H1 (cell line): ENCODE measurements at regions of chr14 and their contacts with region 1.

Region 1: GRCh38 chr14:60331201-60332045 is 82.4 kb downstream of the PPM1A start:
- DNase-seq: peak; percentile 68 to 92
- H3K4me3 ChIP-seq: peak overlapping the region; percentile 32 to 55 (median 44); a peak in 7 of 8 replicates
- H3K27ac ChIP-seq: no peak overlapping the region
- H3K4me1 ChIP-seq: peaks cover 2 to 12% (median 8%) of the 10 kb centered on the region in 4 experiments; a peak in 6 of 7 replicates
- H3K27me3 ChIP-seq: peaks cover 0 to 5% (median 1%) of the 10 kb centered on the region in 4 experiments; a peak in 3 of 7 replicates
- CTCF ChIP-seq: peak; percentile 82 to 87 (median 86)
- EP300 ChIP-seq: no peak
- POLR2A ChIP-seq: no peak
- RAD21 ChIP-seq: peak; percentile 82 to 88

Region 2: DNA sequence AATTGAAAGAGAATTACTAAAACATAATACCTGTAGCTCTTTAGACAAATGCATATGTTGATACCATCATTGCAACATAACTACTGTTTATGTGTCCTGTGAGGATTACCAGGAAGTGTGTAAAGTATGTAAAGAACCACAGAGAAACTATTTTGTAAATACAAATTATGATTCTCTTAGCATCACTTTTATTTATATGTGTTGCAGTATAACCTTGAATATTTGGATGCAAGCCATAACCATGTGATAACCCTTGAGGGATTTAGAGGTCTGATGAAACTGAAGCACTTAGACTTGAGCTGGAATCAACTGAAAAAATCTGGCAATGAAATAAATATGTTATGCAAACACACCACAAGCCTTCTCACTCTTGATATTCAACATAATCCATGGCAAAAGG is 334.0 kb before region 1 on chr14:
- CTCF ChIA-PET with region 1: no interaction called
- POLR2A ChIA-PET with region 1: no interaction called
- DNase-seq: no peak
- H3K4me3 ChIP-seq: no peak overlapping the region
- H3K27ac ChIP-seq: no peak overlapping the region
- H3K4me1 ChIP-seq: no peaks in the 10 kb centered on the region
- H3K27me3 ChIP-seq: no peaks in the 10 kb centered on the region
- CTCF ChIP-seq: no peak
- EP300 ChIP-seq: no peak
- POLR2A ChIP-seq: no peak
- RAD21 ChIP-seq: no peak

Region 3: DNA sequence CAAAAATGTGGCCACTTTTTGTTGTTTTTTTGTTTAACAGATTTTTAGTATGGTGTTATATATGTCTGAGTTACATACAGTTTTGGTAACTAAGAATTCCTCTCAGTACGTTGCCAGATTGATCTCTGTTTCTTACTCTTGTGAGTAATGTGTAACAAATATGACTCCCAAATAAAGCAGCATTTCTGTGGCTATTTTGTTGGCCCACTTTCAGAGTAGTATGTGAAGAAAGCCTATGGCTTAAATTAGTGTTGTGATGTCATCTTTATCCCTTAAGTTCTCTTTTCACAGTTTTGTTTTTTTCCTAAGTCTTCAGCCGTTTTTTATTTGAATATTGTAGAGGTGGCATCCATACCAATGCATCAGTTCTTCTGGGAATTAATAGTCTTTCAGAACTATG is 229.0 kb before region 1 on chr14:
- CTCF ChIA-PET with region 1: no interaction called
- POLR2A ChIA-PET with region 1: no interaction called
- DNase-seq: no peak
- H3K4me3 ChIP-seq: no peak overlapping the region
- H3K27ac ChIP-seq: no peak overlapping the region
- H3K4me1 ChIP-seq: no peaks in the 10 kb centered on the region
- H3K27me3 ChIP-seq: no peaks in the 10 kb centered on the region
- CTCF ChIP-seq: no peak
- EP300 ChIP-seq: no peak
- POLR2A ChIP-seq: no peak
- RAD21 ChIP-seq: no peak

Region 4: DNA sequence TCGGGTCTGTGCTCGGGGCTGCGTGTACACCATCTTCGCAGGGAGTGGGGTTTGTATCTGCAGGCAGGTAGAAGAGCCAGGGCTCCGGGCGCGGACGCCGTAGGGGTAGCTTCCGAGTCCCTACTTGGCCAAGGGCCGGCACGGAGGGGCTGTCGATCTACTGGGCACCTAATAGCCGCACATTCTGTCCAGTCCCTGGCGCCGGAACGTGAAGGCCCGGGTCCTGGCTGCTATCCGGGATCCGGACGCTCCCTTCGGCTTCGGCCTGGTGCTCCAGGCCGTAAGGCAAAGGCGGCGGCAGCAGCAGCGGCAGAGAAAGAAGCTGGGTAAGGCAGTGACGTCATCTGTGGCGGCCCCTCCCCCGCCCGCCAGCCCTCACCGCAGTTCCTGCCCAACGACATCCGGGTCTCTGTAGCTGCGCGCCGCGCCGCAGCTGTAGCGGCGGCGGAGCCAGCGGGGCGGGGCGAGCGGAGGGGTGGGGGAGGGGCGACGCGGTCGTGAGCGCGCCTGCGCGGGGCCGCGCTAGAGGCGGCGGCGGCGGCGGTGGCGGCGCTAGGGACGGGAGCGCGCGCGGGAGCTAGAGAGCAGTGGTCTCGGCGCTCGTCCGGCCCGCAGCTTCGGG is 82.6 kb before region 1 on chr14 and contains the start of gene PPM1A:
- CTCF ChIA-PET with region 1: interaction called, 6 read pairs
- POLR2A ChIA-PET with region 1: interaction called, 13 read pairs
- DNase-seq: peak; percentile 85 to 93
- H3K4me3 ChIP-seq: peak within 1 kb of the TSS; percentile 77 to 96 (median 87)
- H3K27ac ChIP-seq: peak within 1 kb of the TSS; percentile 98
- H3K4me1 ChIP-seq: peaks cover 4 to 12% (median 9%) of the 10 kb centered on the region in 4 experiments
- H3K27me3 ChIP-seq: no peaks in the 10 kb centered on the region
- CTCF ChIP-seq: 0 out of 4 replicates have a peak, but pooled peaks of 1 of the 3 experiments have one; percentile 2
- EP300 ChIP-seq: peak in 1 of 2 experiments; percentile 79; a peak in 1 of 3 replicates
- POLR2A ChIP-seq: peak; percentile 93 to 98
- RAD21 ChIP-seq: no peak
- total RNA-seq, gene PPM1A: 45.2 and 51.2 TPM in 2 replicates

Region 5: GRCh38 chr14:60266021-60266937 is 65.1 kb before region 1 on chr14:
- CTCF ChIA-PET with region 1: interaction called, 73 read pairs
- POLR2A ChIA-PET with region 1: interaction called, 4 read pairs
- DNase-seq: no peak
- H3K4me3 ChIP-seq: no peak overlapping the region
- H3K27ac ChIP-seq: no peak overlapping the region
- H3K4me1 ChIP-seq: no peaks in the 10 kb centered on the region
- H3K27me3 ChIP-seq: no peaks in the 10 kb centered on the region
- CTCF ChIP-seq: peak in 2 of 3 experiments; percentile 53 to 62; a peak in 2 of 4 replicates
- EP300 ChIP-seq: no peak
- POLR2A ChIP-seq: no peak
- RAD21 ChIP-seq: peak; percentile 77

Region 6: DNA sequence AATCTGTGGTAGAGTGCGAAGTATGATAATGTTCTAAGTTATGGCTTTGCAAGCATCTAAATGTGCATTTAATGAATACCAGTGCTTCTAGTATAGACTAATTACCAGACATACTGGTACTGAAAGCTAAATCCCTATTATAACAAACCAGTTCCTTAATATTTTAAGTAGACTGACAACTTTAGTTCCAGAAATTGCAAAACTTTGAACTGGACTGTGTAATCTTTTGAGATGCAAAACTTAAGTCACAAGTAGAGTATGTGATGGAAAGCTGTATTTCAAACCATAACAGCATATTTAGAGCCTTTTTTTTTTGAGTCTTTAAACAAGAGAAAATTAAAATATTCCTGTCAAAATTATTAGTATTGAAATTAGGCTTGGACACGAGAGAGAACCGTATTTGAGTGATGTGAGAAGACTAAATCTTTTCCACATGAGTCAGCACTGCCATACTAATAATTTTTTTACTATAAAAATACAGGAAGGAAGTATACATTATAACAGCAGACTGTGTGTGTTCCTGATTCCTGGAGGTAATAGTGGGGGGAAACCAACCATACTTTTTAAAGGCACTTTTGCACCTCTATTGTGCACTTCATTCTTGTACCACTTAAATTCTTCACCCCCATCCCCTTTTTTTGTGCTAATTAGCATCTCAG is 36.9 kb before region 1 on chr14:
- CTCF ChIA-PET with region 1: interaction called, 12 read pairs
- POLR2A ChIA-PET with region 1: no interaction called
- DNase-seq: no peak
- H3K4me3 ChIP-seq: no peak overlapping the region
- H3K27ac ChIP-seq: no peak overlapping the region
- H3K4me1 ChIP-seq: no peaks in the 10 kb centered on the region
- H3K27me3 ChIP-seq: no peaks in the 10 kb centered on the region
- CTCF ChIP-seq: no peak
- EP300 ChIP-seq: no peak
- POLR2A ChIP-seq: no peak
- RAD21 ChIP-seq: no peak

Region 7: DNA sequence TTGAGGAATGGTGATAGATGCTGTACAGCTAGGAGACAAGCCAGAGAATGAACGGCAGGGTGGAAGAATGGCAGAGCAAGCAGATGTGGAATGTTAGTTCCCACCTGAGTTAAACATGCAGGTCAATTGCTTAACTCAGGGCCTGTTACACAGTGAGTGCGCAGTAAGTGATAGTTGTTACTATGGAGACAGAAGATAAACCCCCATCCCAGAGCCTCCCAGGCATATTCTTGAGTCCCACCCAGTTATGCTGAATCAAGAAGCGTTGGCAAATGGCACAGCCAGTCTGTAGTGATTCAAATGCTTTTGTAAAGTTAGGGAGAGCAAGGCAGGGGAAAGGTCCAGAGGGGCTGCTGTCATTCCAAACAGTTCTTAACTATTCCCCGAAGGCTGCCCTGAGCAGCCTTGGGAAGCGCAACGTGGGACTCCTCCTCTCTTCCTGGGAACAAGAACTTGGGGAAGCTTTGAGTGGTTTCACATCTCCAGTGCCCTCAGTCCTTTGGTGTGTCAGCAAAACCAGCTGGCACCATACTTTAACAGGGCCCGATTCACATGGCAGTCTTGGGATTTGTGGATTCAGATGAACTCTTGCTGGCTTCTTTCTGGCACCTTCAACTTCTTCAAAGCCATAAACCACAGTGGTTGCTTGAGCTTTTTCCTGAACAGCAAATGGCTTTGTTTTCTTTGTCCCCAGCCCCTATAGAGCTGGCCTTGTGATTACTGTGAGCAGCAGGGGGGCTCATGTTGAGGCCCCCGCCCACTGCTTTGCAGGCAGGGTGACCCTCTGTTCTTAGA is 16.0 kb before region 1 on chr14:
- CTCF ChIA-PET with region 1: interaction called, 12 read pairs
- POLR2A ChIA-PET with region 1: interaction called, 8 read pairs
- DNase-seq: no peak
- H3K4me3 ChIP-seq: no peak overlapping the region
- H3K27ac ChIP-seq: no peak overlapping the region
- H3K4me1 ChIP-seq: peaks cover 3 to 29% (median 21%) of the 10 kb centered on the region in 4 experiments
- H3K27me3 ChIP-seq: no peaks in the 10 kb centered on the region
- CTCF ChIP-seq: no peak
- EP300 ChIP-seq: no peak
- POLR2A ChIP-seq: no peak
- RAD21 ChIP-seq: no peak

Region 8: GRCh38 chr14:60488175-60488574 is 156.8 kb after region 1 on chr14:
- CTCF ChIA-PET with region 1: interaction called, 14 read pairs
- POLR2A ChIA-PET with region 1: no interaction called
- DNase-seq: no peak
- H3K4me3 ChIP-seq: no peak overlapping the region
- H3K27ac ChIP-seq: no peak overlapping the region
- H3K4me1 ChIP-seq: no peaks in the 10 kb centered on the region
- H3K27me3 ChIP-seq: peaks cover 0 to 29% (median 16%) of the 10 kb centered on the region in 4 experiments; a peak in 6 of 7 replicates
- CTCF ChIP-seq: peak in 1 of 3 experiments; percentile 20; a peak in 1 of 4 replicates
- EP300 ChIP-seq: no peak
- POLR2A ChIP-seq: no peak
- RAD21 ChIP-seq: peak in 1 of 2 experiments; percentile 48; a peak in 3 of 4 replicates

Region 9: GRCh38 chr14:60561845-60562746 is 230.7 kb after region 1 on chr14:
- CTCF ChIA-PET with region 1: interaction called, 10 read pairs
- POLR2A ChIA-PET with region 1: no interaction called
- DNase-seq: peak; percentile 53 to 60
- H3K4me3 ChIP-seq: no peak overlapping the region
- H3K27ac ChIP-seq: no peak overlapping the region
- H3K4me1 ChIP-seq: no peaks in the 10 kb centered on the region
- H3K27me3 ChIP-seq: no peaks in the 10 kb centered on the region
- CTCF ChIP-seq: peak; percentile 74 to 98 (median 96)
- EP300 ChIP-seq: no peak
- POLR2A ChIP-seq: no peak
- RAD21 ChIP-seq: peak; percentile 98 to 99

Region 10: DNA sequence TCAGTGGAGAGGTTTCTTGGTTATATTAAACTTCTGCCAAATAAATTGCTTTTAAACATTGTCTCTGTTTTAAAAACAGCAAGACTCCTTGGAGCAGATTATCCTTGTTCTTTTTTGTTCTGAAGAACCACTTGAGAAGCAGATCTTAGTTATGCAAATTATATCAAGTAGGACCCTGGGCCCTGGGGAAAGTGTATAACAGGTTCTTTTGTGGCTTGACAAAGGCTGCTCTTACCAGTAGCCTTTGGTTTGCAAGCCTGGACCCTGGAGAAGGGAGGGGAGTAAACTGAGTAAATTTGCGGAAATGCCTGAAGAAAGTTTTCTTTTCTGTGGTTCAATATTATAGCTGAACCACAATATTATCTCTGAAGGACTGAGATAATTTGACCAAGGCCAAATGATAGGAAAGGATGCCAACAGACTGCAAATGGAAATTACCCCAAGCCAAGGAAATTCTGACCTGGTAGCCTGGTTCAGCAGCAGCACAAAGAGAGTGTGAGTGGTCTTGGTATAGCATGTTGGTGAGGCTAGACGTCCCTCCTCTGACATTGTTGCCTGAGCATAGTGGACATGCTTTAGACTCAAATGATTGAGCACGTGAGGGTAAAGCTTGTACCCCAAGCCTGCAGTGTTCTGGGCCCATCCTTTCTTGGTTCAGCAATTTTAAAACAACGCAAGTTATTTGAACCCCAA is 348.3 kb after region 1 on chr14:
- CTCF ChIA-PET with region 1: no interaction called
- POLR2A ChIA-PET with region 1: no interaction called
- DNase-seq: no peak
- H3K4me3 ChIP-seq: peak overlapping the region in 1 of 4 experiments; percentile 18; a peak in 1 of 8 replicates
- H3K27ac ChIP-seq: no peak overlapping the region
- H3K4me1 ChIP-seq: peaks cover 2 to 9% (median 6%) of the 10 kb centered on the region in 4 experiments; a peak in 5 of 7 replicates
- H3K27me3 ChIP-seq: no peaks in the 10 kb centered on the region
- CTCF ChIP-seq: no peak
- EP300 ChIP-seq: no peak
- POLR2A ChIP-seq: no peak
- RAD21 ChIP-seq: no peak